SK-N-SH (cell line): ENCODE measurements at regions of chr17 and their contacts with region 1.

Region 1: DNA sequence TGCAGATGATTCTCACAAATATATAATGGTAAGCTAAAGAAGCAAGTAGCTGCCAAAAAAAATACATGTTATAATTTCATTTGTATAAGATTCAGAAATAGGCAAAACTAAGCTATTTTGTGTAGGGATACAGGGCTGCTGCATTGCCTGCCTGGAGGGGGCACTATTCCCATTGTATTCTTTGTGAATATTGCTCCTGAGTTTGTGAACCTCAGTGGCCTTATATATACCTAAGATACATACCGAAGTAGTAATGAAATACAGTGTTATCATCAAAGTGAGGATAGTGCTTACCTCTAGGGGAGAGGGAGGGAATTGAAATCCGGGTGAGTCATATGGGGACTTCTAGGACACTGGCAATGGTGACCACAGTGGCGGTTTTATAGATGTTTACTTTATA is 53.5 kb downstream of the C17orf58 start:
- DNase-seq: peak; percentile 22
- H3K4me3 ChIP-seq: no peak overlapping the region
- H3K27ac ChIP-seq: no peak overlapping the region
- H3K4me1 ChIP-seq: no peaks in the 10 kb centered on the region
- H3K27me3 ChIP-seq: no peaks in the 10 kb centered on the region
- CTCF ChIP-seq: peak; percentile 72
- EP300 ChIP-seq: no peak
- RAD21 ChIP-seq: peak; percentile 30

Region 2: GRCh38 chr17:67922503-67922902 is 20.3 kb before region 1 on chr17:
- CTCF ChIA-PET with region 1: interaction called, 10 read pairs
- POLR2A ChIA-PET with region 1: interaction called, 4 read pairs
- DNase-seq: no peak
- H3K4me3 ChIP-seq: no peak overlapping the region
- H3K27ac ChIP-seq: no peak overlapping the region
- H3K4me1 ChIP-seq: peaks cover 0 to 2% of the 10 kb centered on the region in 2 experiments; a peak in 2 of 4 replicates
- H3K27me3 ChIP-seq: no peaks in the 10 kb centered on the region
- CTCF ChIP-seq: no peak
- EP300 ChIP-seq: no peak
- RAD21 ChIP-seq: no peak

Region 3: DNA sequence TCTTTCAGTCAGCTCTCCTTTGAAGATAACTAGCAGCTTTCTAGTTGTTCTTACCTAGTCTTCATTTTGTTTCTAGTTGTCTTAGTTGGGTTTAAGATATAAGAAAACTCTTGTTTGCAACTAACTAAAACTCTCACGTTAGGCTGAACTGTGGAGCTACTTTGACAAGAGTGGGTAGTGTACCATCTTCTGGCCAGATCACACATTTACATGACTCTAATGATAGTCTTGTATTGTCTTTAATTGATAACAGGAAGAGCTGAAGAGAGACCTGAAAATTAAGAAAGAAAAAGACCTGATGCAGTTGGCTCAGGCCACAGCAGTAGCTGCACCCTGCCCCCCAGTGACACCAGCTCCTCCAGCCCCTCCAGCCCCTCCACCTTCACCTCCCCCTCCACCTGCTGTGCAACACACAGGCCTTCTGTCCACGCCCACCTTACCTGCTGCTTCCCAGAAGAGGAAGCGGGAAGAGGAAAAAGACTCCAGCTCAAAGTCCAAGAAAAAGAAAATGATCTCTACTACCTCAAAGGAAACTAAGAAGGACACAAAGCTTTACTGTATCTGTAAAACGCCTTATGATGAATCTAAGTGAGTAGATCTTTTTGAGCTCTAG is 16.6 kb after region 1 on chr17:
- CTCF ChIA-PET with region 1: interaction called, 16 read pairs
- POLR2A ChIA-PET with region 1: no interaction called
- DNase-seq: no peak
- H3K4me3 ChIP-seq: no peak overlapping the region
- H3K27ac ChIP-seq: no peak overlapping the region
- H3K4me1 ChIP-seq: no peaks in the 10 kb centered on the region; a peak in 1 of 4 replicates
- H3K27me3 ChIP-seq: no peaks in the 10 kb centered on the region
- CTCF ChIP-seq: no peak
- EP300 ChIP-seq: no peak
- RAD21 ChIP-seq: no peak

Region 4: DNA sequence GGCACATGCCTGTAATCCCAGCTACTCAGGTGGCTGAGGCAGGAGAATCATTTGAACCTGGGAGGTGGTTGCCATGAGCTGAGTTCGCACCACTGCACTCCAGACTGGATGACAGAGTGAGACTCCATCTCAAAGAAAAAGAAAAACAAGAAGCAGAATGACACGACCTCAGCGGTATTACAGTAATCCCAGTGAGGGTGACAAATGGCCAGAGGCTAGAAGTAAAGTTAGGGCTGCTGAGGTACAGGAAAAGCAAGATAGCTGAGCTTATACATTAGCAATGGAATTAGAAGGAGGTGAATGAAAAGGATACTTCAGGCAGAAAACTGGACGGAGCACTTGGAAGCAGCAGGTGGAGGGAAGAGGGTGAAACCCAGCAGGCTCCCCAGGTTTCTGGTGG is 278.9 kb after region 1 on chr17:
- CTCF ChIA-PET with region 1: no interaction called
- POLR2A ChIA-PET with region 1: no interaction called
- DNase-seq: no peak
- H3K4me3 ChIP-seq: no peak overlapping the region
- H3K27ac ChIP-seq: no peak overlapping the region
- H3K4me1 ChIP-seq: no peaks in the 10 kb centered on the region
- H3K27me3 ChIP-seq: no peaks in the 10 kb centered on the region
- CTCF ChIP-seq: no peak
- EP300 ChIP-seq: no peak
- RAD21 ChIP-seq: no peak